HepG2 (cell line): ENCODE measurements at regions of chr17 and their contacts with region 1.

Region 1: DNA sequence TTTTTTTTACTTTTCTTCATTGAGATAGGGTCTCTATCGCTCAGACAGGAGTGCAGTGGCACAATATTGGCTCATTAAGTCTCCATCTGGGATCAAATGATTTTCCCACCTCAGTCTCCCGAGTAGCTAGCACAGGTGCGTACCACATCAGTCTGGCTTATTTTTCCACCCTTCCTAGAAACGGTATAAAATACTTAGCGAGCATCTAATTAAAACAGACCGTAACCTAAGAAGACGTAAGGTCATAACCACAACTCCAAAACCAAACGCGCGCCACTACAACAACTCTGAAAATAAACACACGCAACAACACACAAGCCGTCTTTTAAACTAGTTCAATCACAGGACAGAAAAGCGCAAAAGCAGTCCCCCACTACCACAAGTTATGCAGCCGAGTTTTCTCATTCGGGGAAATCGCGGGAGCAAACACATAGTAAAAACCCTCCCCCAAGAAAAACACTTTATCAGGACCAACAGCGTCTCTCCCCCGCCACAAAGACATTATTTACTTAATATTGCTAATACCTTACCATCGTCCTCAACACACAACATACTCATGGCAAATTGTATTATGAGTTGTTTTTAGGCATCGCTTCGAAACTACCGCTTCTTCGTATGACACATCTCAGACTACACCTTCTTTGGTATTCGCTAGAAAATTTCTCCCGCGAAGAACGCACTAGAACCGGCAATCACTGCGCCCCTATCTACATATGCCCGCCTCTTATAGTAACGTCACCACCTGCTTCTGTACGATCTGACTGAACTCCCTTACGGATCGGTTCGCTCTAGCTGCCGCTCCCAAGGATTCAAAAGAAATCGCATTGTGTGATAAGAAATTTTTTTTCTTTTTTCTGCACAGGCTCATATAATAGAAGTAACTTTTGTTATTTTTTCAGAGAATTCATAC is 32.8 kb downstream of the TEX14 start:
- DNase-seq: peak; percentile 95
- ATAC-seq: peak; percentile 88
- H3K4me3 ChIP-seq: peak overlapping the region; percentile 33 to 59 (median 35)
- H3K27ac ChIP-seq: peak overlapping the region; percentile 88
- H3K4me1 ChIP-seq: peaks cover 14% of the 10 kb centered on the region
- H3K27me3 ChIP-seq: no peaks in the 10 kb centered on the region
- CTCF ChIP-seq: peak; percentile 11; the same call in 1 of the 2 replicates
- EP300 ChIP-seq: peak; percentile 74 to 78; a peak in 2 of 4 replicates
- POLR2A ChIP-seq: peak; percentile 99 to 100
- RAD21 ChIP-seq: peak; percentile 90

Region 2: GRCh38 chr17:58669853-58670252 is 10.8 kb after region 1 on chr17:
- CTCF ChIA-PET with region 1: no interaction called
- POLR2A ChIA-PET with region 1: interaction called, 14 read pairs
- in situ Hi-C with region 1: no loop called
- intact Hi-C with region 1: no loop called
- DNase-seq: no peak
- ATAC-seq: peak; percentile 33; the same call in 2 of the 3 replicates
- H3K4me3 ChIP-seq: no peak overlapping the region
- H3K27ac ChIP-seq: no peak overlapping the region
- H3K4me1 ChIP-seq: peaks cover 10% of the 10 kb centered on the region
- H3K27me3 ChIP-seq: no peaks in the 10 kb centered on the region; a peak in 1 of 5 replicates
- CTCF ChIP-seq: no peak
- EP300 ChIP-seq: no peak
- POLR2A ChIP-seq: no peak
- RAD21 ChIP-seq: no peak

Region 3: DNA sequence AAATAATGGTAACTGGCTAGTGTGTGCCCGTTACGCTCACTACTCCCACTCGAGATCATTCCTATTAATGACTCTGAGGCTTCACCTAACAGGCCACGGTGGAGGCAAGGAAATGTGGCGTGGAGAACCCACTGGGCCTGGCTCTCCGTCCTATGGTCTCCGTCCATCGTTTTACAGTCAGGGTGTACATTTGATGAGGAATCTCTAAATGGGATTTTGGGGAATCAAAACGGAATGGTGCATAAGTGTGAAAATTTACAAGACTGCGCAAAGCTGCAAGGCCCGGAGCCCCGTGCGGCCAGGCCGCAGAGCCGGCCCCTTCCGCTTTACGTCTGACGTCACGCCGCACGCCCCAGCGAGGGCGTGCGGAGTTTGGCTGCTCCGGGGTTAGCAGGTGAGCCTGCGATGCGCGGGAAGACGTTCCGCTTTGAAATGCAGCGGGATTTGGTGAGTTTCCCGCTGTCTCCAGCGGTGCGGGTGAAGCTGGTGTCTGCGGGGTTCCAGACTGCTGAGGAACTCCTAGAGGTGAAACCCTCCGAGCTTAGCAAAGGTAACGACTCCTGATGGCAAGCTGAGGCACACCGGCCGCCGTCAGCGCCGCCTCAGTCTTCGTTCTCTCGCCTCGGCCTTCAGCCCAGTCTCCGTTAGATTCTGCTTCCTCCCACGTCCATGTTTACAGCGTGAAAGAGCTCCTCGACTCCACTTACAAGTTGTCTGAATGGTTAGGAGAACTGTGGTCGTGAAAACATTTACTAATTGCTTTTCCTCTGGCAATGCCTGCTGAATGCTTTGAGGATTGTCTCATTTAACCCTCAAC is 33.4 kb after region 1 on chr17 and contains the start of gene RAD51C:
- CTCF ChIA-PET with region 1: no interaction called
- POLR2A ChIA-PET with region 1: interaction called, 10 read pairs
- in situ Hi-C with region 1: no loop called
- intact Hi-C with region 1: no loop called
- DNase-seq: peak; percentile 84
- ATAC-seq: peak; percentile 99
- H3K4me3 ChIP-seq: peak within 1 kb of the TSS; percentile 63 to 85 (median 69)
- H3K27ac ChIP-seq: peak within 1 kb of the TSS; percentile 77
- H3K4me1 ChIP-seq: peaks cover 26% of the 10 kb centered on the region
- H3K27me3 ChIP-seq: peaks cover 0 to under 1% of the 10 kb centered on the region in 2 experiments; a peak in 1 of 5 replicates
- CTCF ChIP-seq: no peak; the same call in 1 of the 2 replicates
- EP300 ChIP-seq: no peak
- POLR2A ChIP-seq: peak; percentile 86 to 90; a peak in 3 of 4 replicates
- RAD21 ChIP-seq: peak; percentile 49
- total RNA-seq, gene RAD51C: 106 and 151 TPM in 2 replicates

Region 4: GRCh38 chr17:59074494-59074893 is 415.4 kb after region 1 on chr17:
- CTCF ChIA-PET with region 1: no interaction called
- POLR2A ChIA-PET with region 1: no interaction called
- in situ Hi-C with region 1: no loop called
- intact Hi-C with region 1: no loop called
- DNase-seq: no peak
- ATAC-seq: no peak
- H3K4me3 ChIP-seq: no peak overlapping the region
- H3K27ac ChIP-seq: no peak overlapping the region
- H3K4me1 ChIP-seq: no peaks in the 10 kb centered on the region
- H3K27me3 ChIP-seq: no peaks in the 10 kb centered on the region
- CTCF ChIP-seq: no peak
- EP300 ChIP-seq: no peak
- POLR2A ChIP-seq: no peak
- RAD21 ChIP-seq: no peak